ENCODE measurements at regions of chr9 and their contacts with region 1.

Region 1: GRCh38 chr9:17519761-17520160 is 59.1 kb upstream of the SH3GL2 start:
- DNase-seq: no peak
- H3K4me3 ChIP-seq: no peak overlapping the region
- H3K27ac ChIP-seq: no peak overlapping the region
- H3K4me1 ChIP-seq: no peaks in the 10 kb centered on the region
- H3K27me3 ChIP-seq: no peaks in the 10 kb centered on the region
- CTCF ChIP-seq: no peak

Region 2: DNA sequence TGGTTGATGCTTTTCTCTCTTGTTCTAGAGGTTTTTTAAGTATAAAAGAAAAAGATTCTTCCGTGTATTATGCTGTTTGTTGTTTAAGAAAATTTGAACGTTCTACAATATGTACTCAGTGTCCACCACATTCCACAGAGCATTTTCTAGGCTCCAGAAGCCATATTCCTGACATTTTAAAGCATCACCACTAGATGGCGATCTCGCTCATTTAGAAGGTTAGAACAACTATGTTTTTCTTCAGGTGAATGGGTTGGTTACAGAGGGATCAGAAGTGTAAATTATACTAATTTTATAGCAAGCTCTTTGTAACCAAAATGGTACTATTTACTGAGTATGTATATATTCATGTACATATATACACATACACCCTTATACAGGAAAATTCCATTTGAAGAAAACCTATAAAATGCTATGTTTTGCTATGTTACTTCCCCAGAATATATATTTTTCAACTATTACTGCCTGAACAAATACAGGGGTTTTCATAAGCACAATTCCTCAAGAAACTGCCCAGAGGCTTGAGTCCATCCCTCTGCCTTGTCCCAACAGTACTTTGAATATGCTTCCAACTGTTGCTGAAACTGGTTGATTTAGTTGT is 1682.6 kb before region 1 on chr9:
- CTCF ChIA-PET with region 1: no interaction called
- POLR2A ChIA-PET with region 1: no interaction called
- intact Hi-C with region 1: loop called (anchors 5 kb)
- DNase-seq: peak in 1 of 2 experiments; percentile 3
- H3K4me3 ChIP-seq: no peak overlapping the region
- H3K27ac ChIP-seq: no peak overlapping the region
- H3K4me1 ChIP-seq: no peaks in the 10 kb centered on the region
- H3K27me3 ChIP-seq: no peaks in the 10 kb centered on the region
- CTCF ChIP-seq: peak; percentile 80

Region 3: DNA sequence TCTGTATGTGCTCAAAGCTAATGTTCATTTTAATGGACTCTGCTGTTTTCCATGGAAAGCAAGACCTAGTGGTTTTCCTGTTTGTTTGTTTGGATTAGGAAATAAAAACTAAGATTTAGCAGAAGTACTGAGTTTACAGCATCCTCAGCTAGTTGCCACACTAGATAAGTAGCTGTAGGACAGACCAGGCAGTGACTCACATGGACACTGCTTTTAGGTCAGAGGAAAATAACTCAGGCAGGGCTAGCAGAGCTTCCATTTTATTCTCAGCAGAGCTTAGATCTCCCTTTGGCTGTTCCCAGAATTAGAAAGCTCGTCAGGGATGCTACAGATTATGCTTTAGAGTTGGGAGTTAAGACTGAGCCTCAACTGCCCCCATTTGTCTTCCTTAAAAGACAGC is 263.5 kb after region 1 on chr9:
- CTCF ChIA-PET with region 1: no interaction called
- POLR2A ChIA-PET with region 1: no interaction called
- intact Hi-C with region 1: no loop called
- DNase-seq: no peak
- H3K4me3 ChIP-seq: no peak overlapping the region
- H3K27ac ChIP-seq: no peak overlapping the region
- H3K4me1 ChIP-seq: no peaks in the 10 kb centered on the region
- H3K27me3 ChIP-seq: peaks cover 9% of the 10 kb centered on the region; the same call in 1 of the 2 replicates
- CTCF ChIP-seq: no peak

Region 4: DNA sequence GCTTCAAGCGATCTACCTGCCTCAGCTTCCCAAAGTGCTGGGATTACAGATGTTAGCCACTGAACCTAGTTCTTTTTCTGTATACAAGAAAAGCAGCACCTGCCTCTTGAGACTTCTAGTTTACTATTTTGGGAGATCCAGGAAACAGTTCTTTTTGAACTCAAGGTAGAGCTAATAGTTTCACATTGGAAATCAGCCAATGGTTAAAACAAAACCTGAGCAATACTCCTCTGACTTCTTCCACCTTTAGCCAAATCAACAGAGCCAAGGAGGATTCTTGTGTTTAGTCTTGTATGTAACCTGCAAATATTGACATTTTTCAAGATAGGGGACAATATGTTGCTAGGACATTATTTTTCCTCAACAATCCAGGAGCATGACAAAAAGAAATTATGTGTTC is 408.5 kb after region 1 on chr9:
- CTCF ChIA-PET with region 1: no interaction called
- POLR2A ChIA-PET with region 1: no interaction called
- intact Hi-C with region 1: no loop called
- DNase-seq: no peak
- H3K4me3 ChIP-seq: no peak overlapping the region
- H3K27ac ChIP-seq: no peak overlapping the region
- H3K4me1 ChIP-seq: no peaks in the 10 kb centered on the region
- H3K27me3 ChIP-seq: no peaks in the 10 kb centered on the region
- CTCF ChIP-seq: no peak